Naive thymus-derived CD4-positive, alpha-beta T cell (primary cell): ENCODE measurements at regions of chr6 and their contacts with region 1.

Region 1: GRCh38 chr6:151379933-151380847 is 11.2 kb downstream of the ZBTB2 start:
- DNase-seq: peak in 7 of 9 donors; percentile 14 to 50 (median 37)
- ATAC-seq: peak; percentile 84
- H3K4me3 ChIP-seq: peak overlapping the region; percentile 51
- H3K4me3 Mint-ChIP-seq: peak overlapping the region; percentile 82 to 91 (median 86)
- H3K27ac ChIP-seq: peak overlapping the region; percentile 70
- H3K27ac Mint-ChIP-seq: peak overlapping the region; percentile 87 to 97 (median 95)
- H3K4me1 ChIP-seq: peaks cover 28 to 47% of the 10 kb centered on the region in 2 donors
- H3K4me1 Mint-ChIP-seq: peaks cover 49 to 81% (median 72%) of the 10 kb centered on the region in 7 donors
- H3K27me3 ChIP-seq: no peaks in the 10 kb centered on the region
- H3K27me3 Mint-ChIP-seq: no peaks in the 10 kb centered on the region

Region 2: GRCh38 chr6:151014404-151015100 is 365.6 kb before region 1 on chr6:
- CTCF ChIA-PET with region 1: no interaction called
- POLR2A ChIA-PET with region 1: no interaction called
- intact Hi-C with region 1: loop called in 1 of 2 experiments (anchors 1 kb)
- DNase-seq: peak; percentile 17 to 61 (median 47)
- ATAC-seq: peak; percentile 83
- H3K4me3 ChIP-seq: no peak overlapping the region
- H3K4me3 Mint-ChIP-seq: peak overlapping the region in 1 of 10 donors; percentile 22
- H3K27ac ChIP-seq: no peak overlapping the region
- H3K27ac Mint-ChIP-seq: peak overlapping the region in 1 of 9 donors; percentile 41
- H3K4me1 ChIP-seq: no peaks in the 10 kb centered on the region
- H3K4me1 Mint-ChIP-seq: peaks cover 0 to 10% (median 0%) of the 10 kb centered on the region in 7 donors
- H3K27me3 ChIP-seq: no peaks in the 10 kb centered on the region
- H3K27me3 Mint-ChIP-seq: no peaks in the 10 kb centered on the region

Region 3: DNA sequence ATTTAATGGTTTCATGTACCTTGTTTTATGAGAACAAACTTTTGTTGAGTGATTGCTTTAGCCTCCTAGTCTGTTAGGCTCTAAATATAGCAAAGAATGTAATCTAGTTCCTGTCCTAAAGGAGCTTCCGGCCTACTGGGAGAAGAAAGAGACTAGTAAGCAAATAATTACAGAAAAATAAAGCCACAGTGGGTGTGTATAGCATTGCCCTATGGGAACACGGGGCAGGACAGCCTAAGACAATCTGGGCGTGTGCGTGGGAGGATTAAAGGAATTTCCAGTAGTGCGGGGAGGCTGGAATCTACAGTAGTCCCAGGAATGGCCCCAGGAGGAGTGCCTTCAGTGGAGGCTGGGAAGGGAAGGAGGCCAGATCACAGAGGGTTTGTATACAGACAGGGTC is 238.5 kb before region 1 on chr6:
- CTCF ChIA-PET with region 1: no interaction called
- POLR2A ChIA-PET with region 1: no interaction called
- intact Hi-C with region 1: no loop called
- DNase-seq: no peak
- ATAC-seq: no peak
- H3K4me3 ChIP-seq: no peak overlapping the region
- H3K4me3 Mint-ChIP-seq: no peak overlapping the region
- H3K27ac ChIP-seq: no peak overlapping the region
- H3K27ac Mint-ChIP-seq: no peak overlapping the region
- H3K4me1 ChIP-seq: no peaks in the 10 kb centered on the region
- H3K4me1 Mint-ChIP-seq: no peaks in the 10 kb centered on the region
- H3K27me3 ChIP-seq: no peaks in the 10 kb centered on the region
- H3K27me3 Mint-ChIP-seq: peaks cover 0 to 8% (median 3%) of the 10 kb centered on the region in 5 donors

Region 4: GRCh38 chr6:152982768-152983636 is 1602.8 kb after region 1 on chr6 and contains the start of gene FBXO5:
- CTCF ChIA-PET with region 1: no interaction called
- POLR2A ChIA-PET with region 1: no interaction called
- intact Hi-C with region 1: loop called in 1 of 2 experiments (anchors 5 kb)
- DNase-seq: peak; percentile 94 to 98 (median 96)
- ATAC-seq: peak; percentile 97
- H3K4me3 ChIP-seq: peak within 1 kb of the TSS; percentile 94
- H3K4me3 Mint-ChIP-seq: peak within 1 kb of the TSS; percentile 92 to 100 (median 96)
- H3K27ac ChIP-seq: peak within 1 kb of the TSS; percentile 89
- H3K27ac Mint-ChIP-seq: peak within 1 kb of the TSS; percentile 87 to 99 (median 95)
- H3K4me1 ChIP-seq: peaks cover 10 to 20% of the 10 kb centered on the region in 2 donors
- H3K4me1 Mint-ChIP-seq: peaks cover 33 to 58% (median 43%) of the 10 kb centered on the region in 7 donors
- H3K27me3 ChIP-seq: no peaks in the 10 kb centered on the region
- H3K27me3 Mint-ChIP-seq: no peaks in the 10 kb centered on the region
- total RNA-seq, gene FBXO5: 3.2 to 50.2 (median 9.2) TPM